Right cardiac atrium (tissue), 5 donors: ENCODE measurements at regions of chr1 and their contacts with region 1.

Region 1: GRCh38 chr1:58783993-58784757 is at the start of gene JUN:
- DNase-seq: peak; percentile 100
- ATAC-seq: peak; percentile 94 to 95
- H3K4me3 ChIP-seq: peak within 1 kb of the TSS; percentile 74
- H3K27ac ChIP-seq: peak within 1 kb of the TSS; percentile 99
- H3K4me1 ChIP-seq: no peaks in the 10 kb centered on the region
- H3K27me3 ChIP-seq: no peaks in the 10 kb centered on the region
- total RNA-seq, gene JUN: 41.1 to 69.8 (median 50.7) TPM

Region 2: DNA sequence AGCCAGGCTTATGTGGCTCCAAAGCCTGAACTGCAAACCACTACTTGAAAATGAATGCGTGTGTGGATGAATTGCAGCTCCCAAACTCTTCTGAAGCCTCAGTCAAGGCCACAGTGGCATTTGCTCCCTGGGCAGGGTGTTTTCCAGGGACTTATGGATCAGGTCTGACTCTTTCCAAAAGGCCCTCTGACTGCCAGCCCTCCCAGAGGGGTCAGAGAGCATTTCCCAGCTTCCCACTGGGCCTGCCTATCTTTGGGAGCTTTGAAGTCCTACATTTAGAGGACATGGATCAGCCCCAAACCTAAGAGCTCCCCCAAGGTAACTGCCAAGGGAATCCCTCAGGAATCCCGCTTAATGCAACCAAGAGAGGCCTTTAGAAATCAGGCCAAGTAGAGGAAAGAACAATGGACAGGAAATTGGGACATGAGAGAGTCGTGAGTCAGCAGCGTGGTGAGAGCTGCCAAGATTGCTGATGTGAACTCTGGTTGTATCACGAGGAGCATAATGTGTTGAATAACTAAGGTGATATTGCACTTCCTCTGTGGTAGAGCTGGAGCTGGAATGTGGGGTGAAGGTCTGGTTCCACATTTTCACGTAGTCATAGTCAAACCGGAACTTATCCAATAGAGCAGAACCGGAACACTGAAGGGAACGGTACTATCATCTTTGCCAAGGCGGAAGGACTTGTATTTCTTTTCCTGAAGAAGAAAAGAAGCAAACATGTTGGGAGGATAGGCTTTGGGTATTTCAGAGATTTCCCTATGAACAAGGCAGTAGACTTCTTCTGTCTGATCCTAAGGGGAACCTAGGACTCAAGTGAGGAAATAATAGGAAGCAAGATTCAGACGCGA is 99.1 kb after region 1 on chr1:
- intact Hi-C with region 1: loop called in 1 of 4 experiments (anchors 5 kb)
- DNase-seq: peak; percentile 82 to 90 (median 87)
- ATAC-seq: peak; percentile 69 to 85
- H3K4me3 ChIP-seq: no peak overlapping the region
- H3K27ac ChIP-seq: peak overlapping the region; percentile 71
- H3K4me1 ChIP-seq: peaks cover 30% of the 10 kb centered on the region
- H3K27me3 ChIP-seq: no peaks in the 10 kb centered on the region

Region 3: GRCh38 chr1:59013276-59013927 is 229.2 kb after region 1 on chr1:
- intact Hi-C with region 1: loop called in 1 of 4 experiments (anchors 10 kb)
- DNase-seq: peak; percentile 39 to 78 (median 74)
- ATAC-seq: peak; percentile 77 to 87
- H3K4me3 ChIP-seq: no peak overlapping the region
- H3K27ac ChIP-seq: peak overlapping the region; percentile 73
- H3K4me1 ChIP-seq: peaks cover 6% of the 10 kb centered on the region
- H3K27me3 ChIP-seq: no peaks in the 10 kb centered on the region

Region 4: DNA sequence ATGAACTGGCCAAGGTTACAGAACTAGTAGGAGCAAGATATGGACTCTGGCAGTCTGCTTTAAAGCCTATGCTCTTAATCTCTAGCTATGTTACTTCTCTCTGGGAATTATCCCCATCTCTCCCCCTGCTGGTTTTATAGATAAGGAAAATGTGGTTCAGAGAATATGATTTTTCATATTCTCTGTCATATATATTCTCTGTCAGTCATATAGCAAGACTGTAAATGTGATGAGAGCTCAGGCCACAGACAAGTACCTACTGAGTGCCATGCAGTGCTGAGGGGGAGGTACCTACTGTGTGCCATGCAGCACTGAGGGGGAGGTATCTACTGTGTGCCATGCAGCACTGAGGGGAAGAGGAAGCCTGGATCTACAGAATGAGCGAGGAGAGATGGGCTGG is 292.4 kb after region 1 on chr1:
- intact Hi-C with region 1: loop called in 1 of 4 experiments (anchors 10 kb)
- DNase-seq: no peak
- ATAC-seq: peak; percentile 25 to 40
- H3K4me3 ChIP-seq: no peak overlapping the region
- H3K27ac ChIP-seq: no peak overlapping the region
- H3K4me1 ChIP-seq: peaks cover 2% of the 10 kb centered on the region
- H3K27me3 ChIP-seq: no peaks in the 10 kb centered on the region

Region 5: GRCh38 chr1:59296358-59297256 is 512.4 kb after region 1 on chr1 and contains the start of gene FGGY:
- intact Hi-C with region 1: loop called in 3 of 4 experiments (anchors 5 to 10 kb)
- DNase-seq: peak; percentile 99
- ATAC-seq: peak; percentile 97
- H3K4me3 ChIP-seq: peak within 1 kb of the TSS; percentile 63
- H3K27ac ChIP-seq: peak within 1 kb of the TSS; percentile 99
- H3K4me1 ChIP-seq: peaks cover 3% of the 10 kb centered on the region
- H3K27me3 ChIP-seq: no peaks in the 10 kb centered on the region
- total RNA-seq, gene FGGY: 17.4 to 20.5 (median 20.2) TPM

Region 6: DNA sequence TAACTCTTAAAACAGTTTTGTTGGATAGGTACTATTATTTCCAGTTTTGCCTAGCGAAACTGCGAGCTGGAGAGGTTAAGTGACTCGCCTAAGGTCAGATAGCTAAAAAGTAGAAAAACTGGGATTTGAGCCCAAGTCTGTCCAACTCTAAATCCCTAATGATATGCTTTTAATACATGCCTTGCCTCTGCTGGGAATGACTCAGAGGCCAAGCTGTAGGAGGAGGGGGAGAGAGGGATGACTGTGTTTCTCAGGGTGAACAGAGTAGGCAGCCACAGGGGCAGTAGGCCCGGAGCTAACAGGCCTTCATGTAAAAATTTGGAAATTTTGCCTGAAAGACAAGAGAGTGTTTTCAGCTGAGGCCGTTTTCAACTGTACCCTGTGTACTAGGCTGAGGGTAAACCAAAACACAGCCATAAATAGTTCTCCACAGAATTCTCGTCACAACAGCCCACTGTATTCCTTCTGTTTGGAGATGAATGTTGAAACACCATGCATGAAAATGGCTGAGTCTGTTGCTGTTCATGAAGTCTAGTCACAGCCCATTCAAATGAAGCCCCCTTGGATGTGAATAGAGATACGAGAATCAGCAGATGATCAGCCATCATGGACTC is 923.1 kb after region 1 on chr1:
- intact Hi-C with region 1: loop called in 1 of 4 experiments (anchors 10 kb)
- DNase-seq: peak; percentile 66 to 81 (median 69)
- ATAC-seq: peak; percentile 91 to 93
- H3K4me3 ChIP-seq: no peak overlapping the region
- H3K27ac ChIP-seq: peak overlapping the region; percentile 69
- H3K4me1 ChIP-seq: peaks cover 13% of the 10 kb centered on the region
- H3K27me3 ChIP-seq: no peaks in the 10 kb centered on the region